ENCODE measurements at regions of chrX and their contacts with region 1.

Region 1: DNA sequence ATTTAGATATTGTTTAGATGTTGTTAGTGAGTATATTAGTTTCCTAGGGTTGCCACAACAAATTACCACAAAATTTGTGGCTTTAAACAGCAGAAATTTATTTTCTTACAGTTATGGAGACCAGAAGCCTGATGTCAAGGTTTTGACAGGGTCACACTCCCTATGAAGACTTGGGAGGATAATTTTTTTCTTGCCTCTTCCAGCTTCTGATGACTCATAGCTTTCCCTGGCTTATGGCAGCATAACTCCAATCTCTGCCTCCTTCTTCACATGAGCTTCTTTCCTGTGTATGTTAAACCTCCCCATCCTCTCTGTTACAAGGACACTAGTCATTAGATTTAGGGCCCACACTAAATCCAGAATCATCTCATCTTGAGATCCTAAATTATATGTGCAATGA is 20.9 kb upstream of the RAB40A start:
- DNase-seq: no peak
- H3K4me3 ChIP-seq: no peak overlapping the region
- H3K27ac ChIP-seq: no peak overlapping the region
- H3K4me1 ChIP-seq: no peaks in the 10 kb centered on the region
- H3K27me3 ChIP-seq: peaks cover 5% of the 10 kb centered on the region
- CTCF ChIP-seq: no peak

Region 2: DNA sequence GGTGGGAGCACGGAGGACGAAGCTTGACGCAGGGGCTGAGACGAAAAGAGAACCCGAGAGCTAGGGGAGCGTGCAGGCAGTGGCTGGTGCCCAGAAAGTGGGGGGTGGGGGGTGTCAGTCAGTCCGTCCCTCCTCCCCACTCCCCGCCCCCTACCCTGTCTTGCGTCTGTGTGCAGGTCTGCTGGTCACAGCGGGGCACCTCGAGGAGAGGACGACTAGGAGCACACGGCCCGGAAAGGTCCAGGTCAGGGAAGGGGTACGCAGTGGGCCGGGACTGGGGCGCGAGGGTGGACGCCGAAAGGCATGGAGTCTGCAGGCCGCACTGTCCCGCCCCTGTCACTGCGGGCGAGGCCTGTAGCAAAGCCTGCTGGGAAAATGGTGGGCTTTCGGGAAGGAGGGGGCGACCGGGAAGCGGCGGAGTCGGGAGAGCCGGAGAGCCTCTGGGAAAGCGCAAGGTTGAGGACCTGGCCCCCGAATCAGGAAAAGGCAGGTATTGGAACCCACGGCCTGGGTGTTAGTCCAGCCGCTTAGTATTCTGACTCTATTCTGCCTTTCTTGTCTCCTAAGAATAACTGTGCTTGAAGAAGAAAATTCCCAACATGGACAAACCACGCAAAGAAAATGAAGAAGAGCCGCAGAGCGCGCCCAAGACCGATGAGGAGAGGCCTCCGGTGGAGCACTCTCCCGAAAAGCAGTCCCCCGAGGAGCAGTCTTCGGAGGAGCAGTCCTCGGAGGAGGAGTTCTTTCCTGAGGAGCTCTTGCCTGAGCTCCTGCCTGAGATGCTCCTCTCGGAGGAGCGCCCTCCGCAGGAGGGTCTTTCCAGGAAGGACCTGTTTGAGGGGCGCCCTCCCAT is 89.4 kb after region 1 on chrX:
- CTCF ChIA-PET with region 1: no interaction called
- POLR2A ChIA-PET with region 1: no interaction called
- intact Hi-C with region 1: loop called (anchors 10 kb)
- DNase-seq: peak; percentile 73
- H3K4me3 ChIP-seq: peak overlapping the region; percentile 71
- H3K27ac ChIP-seq: peak overlapping the region; percentile 73
- H3K4me1 ChIP-seq: no peaks in the 10 kb centered on the region
- H3K27me3 ChIP-seq: no peaks in the 10 kb centered on the region
- CTCF ChIP-seq: peak; percentile 65

Region 3: DNA sequence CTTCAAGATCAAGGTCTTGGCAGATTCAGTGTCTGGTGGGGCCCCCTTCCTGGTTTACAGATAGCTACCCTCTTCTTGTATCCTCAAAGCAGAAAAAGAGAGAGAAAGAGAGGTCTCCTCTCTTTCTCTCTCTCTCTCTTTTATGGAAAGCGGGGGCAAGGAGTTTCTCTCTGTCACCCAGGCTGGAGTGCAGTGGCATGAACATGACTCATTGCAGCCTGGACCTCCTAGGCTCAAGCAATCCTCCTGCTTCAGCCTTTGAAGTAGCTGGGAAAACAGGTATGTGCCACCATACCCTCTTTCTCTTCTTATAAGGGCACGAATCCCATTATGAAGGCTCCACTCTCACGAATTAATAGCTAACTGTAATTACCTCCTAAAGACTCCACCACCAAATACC is 271.7 kb after region 1 on chrX:
- CTCF ChIA-PET with region 1: no interaction called
- POLR2A ChIA-PET with region 1: no interaction called
- intact Hi-C with region 1: loop called (anchors 2 kb)
- DNase-seq: no peak
- H3K4me3 ChIP-seq: no peak overlapping the region
- H3K27ac ChIP-seq: no peak overlapping the region
- H3K4me1 ChIP-seq: no peaks in the 10 kb centered on the region
- H3K27me3 ChIP-seq: no peaks in the 10 kb centered on the region
- CTCF ChIP-seq: no peak